ENCODE measurements at regions of chr17 and their contacts with region 1.

Region 1: DNA sequence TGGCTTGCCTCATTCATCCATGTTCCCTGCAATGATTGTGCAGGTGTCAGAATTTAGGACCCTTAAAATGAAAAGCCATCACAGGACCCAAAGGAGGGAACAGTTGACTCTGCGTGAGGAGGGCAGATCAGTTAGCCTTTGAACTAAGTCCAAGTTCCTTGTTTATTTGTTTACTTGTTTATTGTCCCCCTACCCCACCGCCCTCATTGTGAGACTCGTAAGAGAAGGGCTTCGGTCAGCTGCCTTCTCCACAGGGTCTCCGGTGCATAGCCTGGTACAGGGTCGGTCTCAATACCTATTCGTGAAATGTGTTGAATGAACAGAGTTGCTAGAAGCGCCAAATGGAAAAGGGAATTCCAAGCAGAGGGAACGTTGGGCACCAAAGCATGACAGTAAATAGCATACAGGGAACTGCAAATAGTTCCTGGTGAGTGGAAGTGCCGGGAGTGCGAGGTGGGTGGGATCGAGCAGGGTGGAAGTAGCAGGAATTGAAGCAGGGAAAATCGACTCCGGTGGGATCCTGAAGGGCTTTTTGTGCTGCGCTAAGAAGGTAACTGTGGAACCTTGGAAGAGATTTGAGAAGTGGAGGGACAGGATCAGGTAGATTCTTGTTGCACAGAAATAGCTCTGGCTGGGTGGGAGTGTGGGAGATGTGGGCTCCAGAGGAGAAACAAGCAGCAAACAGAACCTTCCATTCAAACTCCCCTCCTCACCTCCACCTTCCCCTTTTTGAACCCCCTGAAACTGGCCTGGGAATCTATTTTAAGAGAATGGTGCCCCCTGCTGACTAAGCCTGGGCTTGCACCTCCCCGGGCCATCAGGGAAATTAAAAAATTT is 12.7 kb downstream of the SLC35B1 start:
- DNase-seq: peak; percentile 65 to 83 (median 80)
- H3K4me3 ChIP-seq: peak overlapping the region in 1 of 7 experiments; percentile 55
- H3K27ac ChIP-seq: no peak overlapping the region
- H3K4me1 ChIP-seq: peaks cover 7 to 21% (median 20%) of the 10 kb centered on the region in 4 experiments
- H3K27me3 ChIP-seq: no peaks in the 10 kb centered on the region

Region 2: DNA sequence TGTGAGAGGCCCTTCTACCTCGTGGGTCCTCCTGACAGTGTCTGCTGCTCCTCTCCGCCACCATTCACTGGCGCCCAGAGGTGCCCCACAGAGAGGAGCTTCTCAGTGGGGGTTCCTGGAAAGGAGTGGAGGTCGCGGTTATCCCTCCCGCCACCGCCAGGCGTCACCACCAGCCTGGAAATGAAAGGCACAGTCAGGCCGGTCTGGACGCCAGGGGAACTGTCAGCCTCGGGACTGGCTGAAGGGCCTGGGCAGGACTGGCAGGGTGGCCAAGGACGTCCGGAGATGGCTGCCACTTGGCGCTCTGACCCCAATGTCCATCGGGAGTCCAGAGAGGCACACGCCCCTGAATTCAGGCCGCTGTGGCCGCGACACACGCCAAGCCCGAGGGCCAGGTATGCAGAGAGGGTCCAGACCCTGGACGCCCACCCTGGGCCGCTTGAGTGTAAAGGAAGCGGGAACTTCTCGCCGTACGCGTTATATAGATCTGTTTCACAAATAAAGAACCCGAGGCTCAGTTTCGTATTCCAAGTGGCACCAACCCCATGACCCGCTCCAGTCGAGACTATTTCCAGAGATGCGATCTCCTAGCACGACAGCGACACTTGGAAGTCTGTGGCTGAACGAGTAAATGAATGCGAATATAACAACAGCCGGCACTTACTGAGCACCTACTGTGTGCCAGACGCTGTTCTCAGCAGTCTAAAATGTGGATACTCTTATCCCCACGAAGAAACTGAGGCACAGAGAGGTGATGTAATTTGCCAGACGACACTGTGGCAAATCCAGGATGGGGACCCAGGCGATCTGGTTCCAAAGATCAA is 127.0 kb before region 1 on chr17:
- CTCF ChIA-PET with region 1: interaction called, 277 read pairs
- POLR2A ChIA-PET with region 1: interaction called, 6 read pairs
- DNase-seq: peak; percentile 69 to 83 (median 82)
- H3K4me3 ChIP-seq: peak overlapping the region in 6 of 7 experiments; percentile 36 to 82 (median 62)
- H3K27ac ChIP-seq: no peak overlapping the region
- H3K4me1 ChIP-seq: peaks cover 0 to 30% (median 23%) of the 10 kb centered on the region in 4 experiments
- H3K27me3 ChIP-seq: peaks cover 0 to 14% (median 7%) of the 10 kb centered on the region in 5 experiments

Region 3: GRCh38 chr17:49681106-49681979 is 13.7 kb before region 1 on chr17:
- CTCF ChIA-PET with region 1: interaction called, 20 read pairs
- POLR2A ChIA-PET with region 1: interaction called, 4 read pairs
- DNase-seq: peak in 2 of 3 donors; percentile 8 to 15
- H3K4me3 ChIP-seq: no peak overlapping the region
- H3K27ac ChIP-seq: no peak overlapping the region
- H3K4me1 ChIP-seq: peaks cover 10 to 20% (median 15%) of the 10 kb centered on the region in 4 experiments
- H3K27me3 ChIP-seq: no peaks in the 10 kb centered on the region

Region 4: GRCh38 chr17:49851387-49852291 is 156.6 kb after region 1 on chr17:
- CTCF ChIA-PET with region 1: interaction called, 15 read pairs
- POLR2A ChIA-PET with region 1: no interaction called
- DNase-seq: peak; percentile 79 to 91 (median 90)
- H3K4me3 ChIP-seq: peak overlapping the region; percentile 28 to 79 (median 66)
- H3K27ac ChIP-seq: peak overlapping the region in 1 of 2 experiments; percentile 20
- H3K4me1 ChIP-seq: peaks cover 0 to 49% (median 31%) of the 10 kb centered on the region in 4 experiments
- H3K27me3 ChIP-seq: no peaks in the 10 kb centered on the region

Measured in common myeloid progenitor, CD34-positive (primary cell).